K562 (cell line): ENCODE measurements at regions of chr4 and their contacts with region 1.

Region 1: GRCh38 chr4:81405894-81406401 is 65.8 kb downstream of the RASGEF1B start:
- DNase-seq: peak; percentile 68 to 83 (median 74)
- ATAC-seq: peak; percentile 87
- H3K4me3 ChIP-seq: no peak overlapping the region
- H3K27ac ChIP-seq: no peak overlapping the region
- H3K4me1 ChIP-seq: peaks cover 0 to 17% of the 10 kb centered on the region in 2 experiments; a peak in 3 of 5 replicates
- H3K27me3 ChIP-seq: peaks cover 3 to 5% of the 10 kb centered on the region in 2 experiments; a peak in 2 of 5 replicates
- CTCF ChIP-seq: peak; percentile 57 to 77 (median 64); a peak in 5 of 6 replicates
- EP300 ChIP-seq: no peak
- POLR2A ChIP-seq: no peak
- RAD21 ChIP-seq: peak; percentile 80 to 96

Region 2: DNA sequence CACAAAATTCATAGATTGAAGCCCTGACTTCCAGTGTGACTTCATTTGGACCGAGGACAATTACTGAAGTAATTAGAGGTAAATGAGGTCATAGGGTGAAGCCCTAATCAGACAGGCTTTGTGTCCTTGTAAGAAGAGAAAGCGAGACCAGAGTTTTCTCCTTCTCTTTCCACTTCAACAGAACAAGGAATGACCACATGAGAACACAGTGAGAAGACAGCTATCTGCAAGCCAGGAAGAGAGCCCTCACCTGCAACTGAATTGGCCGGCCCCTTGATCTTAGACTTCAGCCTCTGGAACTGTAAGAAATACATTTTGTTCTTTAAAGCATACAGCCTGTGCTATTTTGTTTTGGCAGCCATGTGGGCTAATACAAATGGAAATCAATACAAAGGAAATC is 123.8 kb before region 1 on chr4:
- CTCF ChIA-PET with region 1: no interaction called
- POLR2A ChIA-PET with region 1: no interaction called
- in situ Hi-C with region 1: no loop called
- intact Hi-C with region 1: no loop called
- DNase-seq: no peak
- ATAC-seq: no peak
- H3K4me3 ChIP-seq: no peak overlapping the region
- H3K27ac ChIP-seq: no peak overlapping the region
- H3K4me1 ChIP-seq: no peaks in the 10 kb centered on the region
- H3K27me3 ChIP-seq: no peaks in the 10 kb centered on the region
- CTCF ChIP-seq: no peak
- EP300 ChIP-seq: no peak
- POLR2A ChIP-seq: no peak
- RAD21 ChIP-seq: no peak

Region 3: GRCh38 chr4:81471588-81472288 is 65.8 kb after region 1 on chr4 and contains the start of gene RASGEF1B:
- CTCF ChIA-PET with region 1: interaction called, 9 read pairs
- POLR2A ChIA-PET with region 1: no interaction called
- in situ Hi-C with region 1: no loop called
- intact Hi-C with region 1: loop called (anchors 1 kb)
- DNase-seq: peak; percentile 88 to 98 (median 96)
- ATAC-seq: peak; percentile 99
- H3K4me3 ChIP-seq: peak within 1 kb of the TSS; percentile 64
- H3K27ac ChIP-seq: no peak within 1 kb of the TSS; the same call in 2 of the 3 replicates
- H3K4me1 ChIP-seq: peaks cover 19% of the 10 kb centered on the region in 2 experiments; a peak in 4 of 5 replicates
- H3K27me3 ChIP-seq: peaks cover 17 to 24% of the 10 kb centered on the region in 2 experiments
- CTCF ChIP-seq: no peak
- EP300 ChIP-seq: no peak
- POLR2A ChIP-seq: no peak
- RAD21 ChIP-seq: no peak
- polyA plus RNA-seq, gene RASGEF1B: 0.04 to 0.20 TPM

Region 4: DNA sequence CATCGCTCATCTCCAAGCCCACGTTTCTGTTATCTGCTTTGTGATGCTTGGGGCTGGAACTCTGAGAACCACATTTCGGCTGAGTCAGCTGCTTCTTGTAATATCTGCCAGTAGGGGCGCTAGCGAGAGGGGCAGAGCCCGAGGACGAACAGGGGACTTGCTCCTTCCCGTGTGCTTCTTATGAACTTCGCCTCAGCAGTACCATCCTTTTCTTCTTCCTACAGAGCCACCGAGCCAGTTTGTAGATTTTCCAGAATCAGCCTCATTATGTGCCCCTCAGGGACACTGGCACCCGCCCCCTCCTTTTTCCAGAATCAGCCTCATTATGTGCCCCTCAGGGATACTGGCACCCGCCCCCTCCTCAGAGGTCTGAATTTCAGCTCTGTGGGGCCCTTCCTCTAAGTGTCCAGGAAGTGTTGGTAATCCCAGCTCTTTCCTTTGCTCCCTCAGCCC is 507.5 kb after region 1 on chr4:
- CTCF ChIA-PET with region 1: no interaction called
- POLR2A ChIA-PET with region 1: no interaction called
- in situ Hi-C with region 1: loop called (anchors 10 kb)
- intact Hi-C with region 1: loop called (anchors 2 kb)
- DNase-seq: peak; percentile 78 to 82 (median 80)
- ATAC-seq: peak; percentile 96
- H3K4me3 ChIP-seq: no peak overlapping the region
- H3K27ac ChIP-seq: no peak overlapping the region
- H3K4me1 ChIP-seq: no peaks in the 10 kb centered on the region
- H3K27me3 ChIP-seq: no peaks in the 10 kb centered on the region
- CTCF ChIP-seq: peak; percentile 89 to 96 (median 91)
- EP300 ChIP-seq: no peak
- POLR2A ChIP-seq: no peak
- RAD21 ChIP-seq: peak; percentile 31 to 47

Region 5: DNA sequence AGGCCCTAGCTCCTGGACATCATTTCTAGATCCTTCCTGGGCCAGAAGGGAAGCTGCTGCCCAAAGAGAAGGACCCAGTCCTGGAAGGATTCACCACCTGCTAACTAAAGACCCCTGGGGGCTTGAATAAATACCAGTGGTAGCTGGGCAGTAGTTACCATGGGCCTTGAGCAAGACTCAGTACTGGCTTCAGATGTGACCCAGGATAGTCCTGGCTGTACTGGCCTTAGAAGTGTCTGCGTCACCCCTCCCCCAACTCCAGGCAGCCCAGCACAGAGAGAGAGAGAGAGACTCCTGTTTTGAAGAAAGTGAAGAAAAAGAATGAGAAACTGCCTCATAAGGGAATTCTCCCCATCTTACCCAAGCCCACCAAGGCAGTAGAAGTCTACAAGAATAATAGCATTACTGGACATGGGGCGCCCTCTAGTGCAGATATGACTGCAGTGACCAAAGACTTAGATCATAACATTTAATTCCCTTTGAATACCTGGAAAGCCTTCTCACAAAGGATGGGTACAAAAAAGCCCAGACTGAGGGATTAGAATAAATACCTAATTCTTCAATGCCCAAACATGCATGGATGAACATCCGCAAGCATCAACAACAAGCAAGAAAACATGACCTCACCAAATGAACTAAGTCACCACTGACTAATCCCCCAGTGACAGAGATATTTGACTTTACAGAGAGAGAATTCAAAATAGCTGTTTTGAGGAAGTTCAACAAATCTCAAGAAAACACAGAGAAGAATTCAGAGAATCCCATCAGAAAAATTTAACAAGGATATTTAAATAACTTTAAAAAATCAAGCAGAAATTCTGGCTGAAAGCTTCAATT is 796.1 kb after region 1 on chr4:
- CTCF ChIA-PET with region 1: interaction called, 28 read pairs
- POLR2A ChIA-PET with region 1: no interaction called
- in situ Hi-C with region 1: loop called (anchors 5 kb)
- intact Hi-C with region 1: loop called (anchors 1 kb)
- DNase-seq: peak; percentile 13 to 72 (median 19)
- ATAC-seq: peak; percentile 90
- H3K4me3 ChIP-seq: no peak overlapping the region
- H3K27ac ChIP-seq: no peak overlapping the region
- H3K4me1 ChIP-seq: no peaks in the 10 kb centered on the region
- H3K27me3 ChIP-seq: no peaks in the 10 kb centered on the region
- CTCF ChIP-seq: peak; percentile 73 to 87 (median 80)
- EP300 ChIP-seq: no peak
- POLR2A ChIP-seq: no peak
- RAD21 ChIP-seq: peak; percentile 90 to 92